ENCODE measurements at regions of chr12 and their contacts with region 1.

Region 1: DNA sequence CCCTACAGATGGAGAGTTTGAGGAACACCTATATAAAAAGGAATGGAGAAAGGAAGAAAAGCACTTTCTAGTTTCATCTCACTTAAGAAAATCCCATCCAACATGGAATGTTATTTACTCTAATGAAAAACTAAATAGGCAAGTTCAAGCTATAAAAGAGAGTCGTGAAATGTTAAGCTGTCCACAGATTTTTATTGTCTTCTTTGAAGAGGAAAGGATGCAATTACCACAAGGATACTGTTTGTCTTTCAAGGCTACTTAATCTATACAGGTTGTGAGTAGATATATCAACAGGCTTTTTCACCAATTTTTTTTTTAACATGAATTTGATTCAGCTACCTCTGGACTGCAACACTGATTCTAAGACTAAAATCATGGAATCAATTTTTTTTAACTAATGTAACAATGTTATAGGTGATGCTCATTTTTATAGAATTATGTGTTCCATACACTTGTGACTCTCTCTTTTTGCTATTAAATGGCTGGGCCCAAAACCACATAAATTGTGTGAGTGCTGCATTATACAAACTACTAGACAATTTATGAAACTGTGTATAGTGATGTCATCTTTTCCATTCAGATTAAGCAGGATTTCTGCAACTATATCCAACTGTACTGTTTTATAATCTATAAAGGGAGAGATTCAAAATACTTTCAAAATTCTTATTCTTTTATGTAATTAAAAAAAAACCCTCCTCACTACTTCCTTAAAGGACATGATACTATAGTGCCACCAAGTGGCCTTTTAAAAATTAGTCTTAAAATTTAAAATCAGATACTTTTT is 26.8 kb upstream of the BMAL2 start:
- DNase-seq: no peak
- H3K4me3 Mint-ChIP-seq: no peak overlapping the region
- H3K27ac Mint-ChIP-seq: no peak overlapping the region
- H3K4me1 Mint-ChIP-seq: no peaks in the 10 kb centered on the region
- H3K27me3 Mint-ChIP-seq: no peaks in the 10 kb centered on the region

Region 2: DNA sequence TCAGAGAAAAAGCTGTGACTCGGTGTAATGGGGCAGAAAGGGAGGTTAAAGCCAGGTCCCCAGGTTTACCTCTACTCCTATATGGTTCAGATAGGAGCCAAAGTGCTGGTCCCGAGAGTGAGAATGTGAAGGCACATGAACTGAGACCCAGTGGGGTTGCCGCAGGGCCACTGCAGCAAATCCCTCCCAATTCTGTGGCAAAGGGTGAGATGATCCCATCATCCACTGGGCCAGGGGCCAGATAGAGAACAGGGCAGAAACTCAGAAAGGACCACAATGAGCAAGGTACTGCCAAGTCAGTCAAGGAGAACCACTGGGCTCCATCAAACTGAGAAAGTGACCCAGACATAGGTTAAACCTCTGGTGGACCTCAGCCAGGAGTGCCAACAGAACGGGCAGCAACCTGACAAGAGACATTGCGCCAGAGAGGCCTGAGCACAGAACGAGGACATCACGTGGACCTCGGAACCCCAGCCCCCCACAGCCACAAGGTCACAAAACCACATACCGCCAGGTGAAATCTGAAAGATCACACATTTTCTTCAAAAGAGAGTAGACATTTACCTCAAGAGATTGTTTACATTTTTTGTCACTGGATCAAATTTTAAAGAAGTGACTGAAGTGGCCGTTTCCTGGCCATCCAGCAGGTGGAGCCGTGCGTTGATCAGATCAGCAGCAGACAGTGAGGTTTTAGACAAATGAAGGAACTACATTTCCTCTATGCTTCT is 452.4 kb before region 1 on chr12:
- CTCF ChIA-PET with region 1: interaction called, 6 read pairs
- intact Hi-C with region 1: loop called (anchors 1 kb)
- DNase-seq: peak; percentile 86
- H3K4me3 Mint-ChIP-seq: no peak overlapping the region
- H3K27ac Mint-ChIP-seq: no peak overlapping the region
- H3K4me1 Mint-ChIP-seq: no peaks in the 10 kb centered on the region
- H3K27me3 Mint-ChIP-seq: peaks cover 3% of the 10 kb centered on the region

Region 3: GRCh38 chr12:27024291-27024690 is 281.6 kb before region 1 on chr12:
- CTCF ChIA-PET with region 1: interaction called, 95 read pairs
- intact Hi-C with region 1: loop called (anchors 2 kb)
- DNase-seq: no peak
- H3K4me3 Mint-ChIP-seq: no peak overlapping the region
- H3K27ac Mint-ChIP-seq: no peak overlapping the region
- H3K4me1 Mint-ChIP-seq: peaks cover 30% of the 10 kb centered on the region
- H3K27me3 Mint-ChIP-seq: no peaks in the 10 kb centered on the region

Region 4: GRCh38 chr12:27123642-27124041 is 182.2 kb before region 1 on chr12:
- CTCF ChIA-PET with region 1: interaction called, 10 read pairs
- intact Hi-C with region 1: loop called (anchors 1 kb)
- DNase-seq: no peak
- H3K4me3 Mint-ChIP-seq: no peak overlapping the region
- H3K27ac Mint-ChIP-seq: no peak overlapping the region
- H3K4me1 Mint-ChIP-seq: no peaks in the 10 kb centered on the region
- H3K27me3 Mint-ChIP-seq: no peaks in the 10 kb centered on the region

Region 5: DNA sequence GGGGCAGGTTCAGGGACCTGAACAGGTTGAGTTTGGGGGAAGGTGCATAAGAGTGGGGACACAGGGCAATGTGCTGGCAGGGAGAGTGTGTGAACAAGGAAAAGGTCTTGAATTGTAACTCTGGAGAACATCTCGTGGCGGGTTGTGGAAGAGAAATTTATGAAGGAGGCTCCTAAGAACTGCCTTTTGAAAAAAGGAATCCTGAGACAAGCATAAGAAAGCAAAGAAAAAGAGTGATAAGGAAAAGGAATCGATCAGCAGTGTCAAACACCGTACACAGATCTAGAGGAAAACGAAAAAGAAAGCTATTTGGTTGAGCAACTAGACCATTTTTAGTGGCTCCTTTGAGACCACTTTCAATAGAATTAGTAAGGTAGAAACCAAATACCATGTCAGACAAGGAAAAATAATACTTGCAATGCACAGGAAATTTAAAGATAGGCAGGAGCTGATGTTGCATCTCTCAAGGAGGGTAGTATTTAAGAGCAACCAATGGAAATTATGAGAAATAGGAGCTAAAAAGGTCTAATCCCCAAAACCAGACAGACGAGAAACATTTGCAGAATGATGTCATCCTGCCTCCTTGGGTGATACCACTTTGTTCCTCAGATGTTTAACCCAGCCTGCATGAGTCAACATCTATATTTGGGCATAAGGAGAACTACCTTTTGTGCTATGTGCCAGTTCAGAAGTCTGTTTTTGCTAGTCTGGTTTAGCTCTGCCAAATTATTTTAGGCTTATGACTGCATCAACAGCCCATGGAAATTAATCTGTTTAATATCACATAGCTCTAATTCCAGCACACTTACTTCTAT is 126.3 kb before region 1 on chr12:
- CTCF ChIA-PET with region 1: interaction called, 10 read pairs
- intact Hi-C with region 1: no loop called
- DNase-seq: peak; percentile 69
- H3K4me3 Mint-ChIP-seq: no peak overlapping the region
- H3K27ac Mint-ChIP-seq: peak overlapping the region; percentile 76
- H3K4me1 Mint-ChIP-seq: peaks cover 38% of the 10 kb centered on the region
- H3K27me3 Mint-ChIP-seq: peaks cover 2% of the 10 kb centered on the region

Region 6: DNA sequence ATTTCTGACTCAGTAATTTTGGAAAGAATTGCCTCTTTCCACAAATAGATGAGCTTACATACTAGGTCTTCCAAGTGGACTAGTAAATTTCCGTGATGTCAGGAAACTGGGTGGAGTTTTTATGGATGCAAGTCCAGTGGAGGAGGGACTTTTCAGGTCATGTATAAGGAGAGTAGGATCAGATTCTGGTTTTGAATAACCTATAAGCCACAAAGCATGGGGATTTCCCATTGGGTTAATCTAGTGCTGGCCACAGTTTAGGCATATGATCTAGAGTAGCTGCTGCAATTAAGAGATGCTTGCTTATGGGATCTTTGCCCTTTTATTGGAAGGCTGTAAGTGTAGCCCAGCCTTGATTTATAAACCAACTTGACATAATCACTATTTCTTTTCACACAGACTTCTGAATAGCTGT is 28.0 kb before region 1 on chr12:
- CTCF ChIA-PET with region 1: interaction called, 16 read pairs
- intact Hi-C with region 1: no loop called
- DNase-seq: peak; percentile 34
- H3K4me3 Mint-ChIP-seq: no peak overlapping the region
- H3K27ac Mint-ChIP-seq: no peak overlapping the region
- H3K4me1 Mint-ChIP-seq: peaks cover 33% of the 10 kb centered on the region
- H3K27me3 Mint-ChIP-seq: no peaks in the 10 kb centered on the region

Region 7: DNA sequence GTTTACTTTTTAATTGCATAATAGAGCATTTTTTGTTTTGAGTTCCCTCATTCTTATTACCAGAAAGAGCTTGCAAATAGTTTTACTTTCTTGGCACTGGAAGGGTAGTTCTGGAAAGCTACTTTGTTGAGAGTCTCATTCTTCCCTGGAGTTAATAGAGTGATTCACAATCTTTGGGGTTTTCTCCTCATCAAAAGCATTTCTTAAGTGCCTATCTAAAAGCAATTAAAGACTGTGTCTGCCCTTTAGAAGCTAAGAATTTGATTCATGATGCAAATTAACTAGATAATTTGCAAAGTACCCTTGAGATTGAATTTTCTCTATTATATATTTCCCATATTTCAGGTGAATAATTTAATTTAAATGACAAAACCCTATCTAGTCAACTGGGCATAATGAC is 18.7 kb after region 1 on chr12:
- CTCF ChIA-PET with region 1: interaction called, 15 read pairs
- intact Hi-C with region 1: no loop called
- DNase-seq: no peak
- H3K4me3 Mint-ChIP-seq: no peak overlapping the region
- H3K27ac Mint-ChIP-seq: no peak overlapping the region
- H3K4me1 Mint-ChIP-seq: peaks cover 2% of the 10 kb centered on the region
- H3K27me3 Mint-ChIP-seq: no peaks in the 10 kb centered on the region

Region 8: DNA sequence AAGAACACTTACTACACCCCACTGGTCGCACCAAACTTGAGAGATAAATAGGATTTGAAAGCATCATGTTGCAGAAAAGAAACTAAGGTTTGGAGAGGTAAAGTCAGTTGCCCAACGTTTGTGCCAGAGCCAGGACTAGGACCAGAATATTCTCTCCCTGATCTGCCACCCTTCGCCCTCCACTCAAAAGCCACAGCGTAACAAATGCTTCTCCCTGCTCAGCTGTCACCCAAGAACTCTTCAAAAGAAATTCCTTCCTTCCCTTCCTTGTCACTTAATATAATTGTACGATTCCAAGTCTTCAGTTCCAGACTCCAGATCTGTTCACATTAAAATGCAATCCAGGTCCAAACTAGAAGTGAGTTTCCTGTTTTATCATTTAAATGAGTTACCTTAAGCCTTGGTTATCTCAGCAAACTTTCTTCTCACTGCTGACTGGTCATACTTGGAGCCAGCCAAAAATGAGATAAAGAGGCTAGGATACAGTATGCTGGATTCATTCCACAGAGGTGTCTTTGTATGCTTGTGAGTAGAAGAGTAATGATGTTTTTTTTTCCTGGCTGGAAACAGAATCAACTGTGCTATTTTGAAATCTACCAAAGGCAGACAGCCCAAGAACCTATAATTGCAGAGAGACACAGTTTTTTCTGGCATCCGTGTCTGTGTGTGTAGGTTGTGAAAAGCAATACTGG is 205.3 kb after region 1 on chr12:
- CTCF ChIA-PET with region 1: no interaction called
- intact Hi-C with region 1: no loop called
- DNase-seq: no peak
- H3K4me3 Mint-ChIP-seq: no peak overlapping the region
- H3K27ac Mint-ChIP-seq: no peak overlapping the region
- H3K4me1 Mint-ChIP-seq: no peaks in the 10 kb centered on the region
- H3K27me3 Mint-ChIP-seq: peaks cover 5% of the 10 kb centered on the region

Region 9: GRCh38 chr12:27595231-27595642 is 289.4 kb after region 1 on chr12:
- CTCF ChIA-PET with region 1: no interaction called
- intact Hi-C with region 1: no loop called
- DNase-seq: no peak
- H3K4me3 Mint-ChIP-seq: no peak overlapping the region
- H3K27ac Mint-ChIP-seq: no peak overlapping the region
- H3K4me1 Mint-ChIP-seq: peaks cover 2% of the 10 kb centered on the region
- H3K27me3 Mint-ChIP-seq: no peaks in the 10 kb centered on the region

Measured in activated naive CD4-positive, alpha-beta T cell treated with anti-CD3 and anti-CD28 coated beads for 36 hours (primary cell).